GM10248 (cell line): ENCODE measurements at regions of chr1 and their contacts with region 1.

Region 1: DNA sequence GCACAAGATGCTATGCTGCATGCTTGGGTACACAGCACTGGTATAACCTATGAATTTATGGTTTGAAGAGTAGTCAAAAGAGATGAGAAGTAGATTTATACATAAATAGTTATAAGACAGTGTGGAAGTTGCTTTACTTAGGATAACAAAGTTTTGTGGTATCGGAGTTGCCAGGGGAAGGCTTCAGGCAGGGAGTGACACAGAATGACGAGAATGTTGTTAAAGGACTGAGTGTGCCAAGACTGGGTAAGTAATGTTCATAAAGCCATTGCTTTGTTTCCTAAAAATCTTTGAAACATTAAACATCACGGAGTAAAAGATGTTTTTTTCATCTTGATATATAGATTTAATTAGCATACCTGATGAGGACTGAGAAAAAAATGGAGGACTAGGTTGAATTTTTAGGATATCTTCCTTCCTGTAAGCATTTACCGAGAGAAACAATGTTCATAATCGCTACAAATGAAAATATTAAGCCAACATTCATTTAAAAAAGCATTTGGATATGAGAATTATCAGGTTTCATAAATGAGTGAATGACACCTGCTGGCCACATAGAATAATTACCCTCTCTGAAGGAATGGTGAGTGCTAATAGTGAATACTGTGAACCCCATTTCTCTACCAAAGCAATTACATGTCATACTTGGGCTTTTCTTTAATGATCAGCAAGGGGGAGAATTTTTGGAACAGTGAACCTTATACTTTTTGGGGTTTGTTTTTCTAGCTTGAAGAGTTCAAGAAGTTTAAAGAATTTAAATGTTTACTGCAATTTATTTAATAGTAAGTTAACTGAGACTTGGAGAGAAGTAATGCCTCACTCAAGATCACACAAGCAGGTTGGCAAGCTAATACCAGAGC is 28.4 kb downstream of the EXTL2 start:
- DNase-seq: peak; percentile 19
- CTCF ChIP-seq: peak; percentile 47

Region 2: DNA sequence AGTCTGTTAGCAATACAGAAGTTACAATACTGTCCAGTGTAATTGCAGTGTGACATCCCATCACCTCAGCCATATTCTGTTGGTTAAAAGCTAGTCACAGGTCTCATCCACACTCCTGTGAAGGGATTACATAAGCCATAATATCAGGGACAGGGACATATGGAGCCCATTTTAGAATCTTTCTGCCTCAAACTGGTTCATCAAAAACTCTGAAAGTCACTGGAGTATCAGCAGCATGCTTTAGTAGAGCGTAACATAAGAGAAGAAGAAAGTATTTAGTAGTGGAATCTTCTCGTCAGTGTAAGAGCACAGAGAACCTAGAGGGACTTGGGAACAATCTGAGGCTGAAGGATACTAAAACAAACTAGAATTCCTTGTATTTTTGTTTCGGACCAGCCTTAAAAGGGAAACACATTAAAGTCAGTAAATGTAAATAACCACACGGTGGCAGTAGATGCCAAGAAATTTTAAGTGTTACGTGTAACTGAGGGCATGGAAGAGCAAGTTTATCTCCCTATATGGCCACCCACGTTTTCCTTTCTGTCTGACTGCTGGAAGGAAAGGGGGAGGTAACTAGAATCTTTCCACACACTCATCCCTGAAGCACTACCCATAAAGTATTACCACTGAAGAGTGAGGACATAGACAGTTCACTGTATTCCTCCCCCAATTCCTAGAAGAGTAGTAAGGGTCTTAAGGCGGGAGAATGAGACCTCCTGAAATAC is 1057.7 kb before region 1 on chr1:
- CTCF ChIA-PET with region 1: interaction called, 31 read pairs
- POLR2A ChIA-PET with region 1: no interaction called
- DNase-seq: peak; percentile 66
- CTCF ChIP-seq: peak; percentile 43

Region 3: GRCh38 chr1:100799954-100800612 is 66.2 kb before region 1 on chr1:
- CTCF ChIA-PET with region 1: no interaction called
- POLR2A ChIA-PET with region 1: no interaction called
- DNase-seq: no peak
- CTCF ChIP-seq: no peak

Region 4: DNA sequence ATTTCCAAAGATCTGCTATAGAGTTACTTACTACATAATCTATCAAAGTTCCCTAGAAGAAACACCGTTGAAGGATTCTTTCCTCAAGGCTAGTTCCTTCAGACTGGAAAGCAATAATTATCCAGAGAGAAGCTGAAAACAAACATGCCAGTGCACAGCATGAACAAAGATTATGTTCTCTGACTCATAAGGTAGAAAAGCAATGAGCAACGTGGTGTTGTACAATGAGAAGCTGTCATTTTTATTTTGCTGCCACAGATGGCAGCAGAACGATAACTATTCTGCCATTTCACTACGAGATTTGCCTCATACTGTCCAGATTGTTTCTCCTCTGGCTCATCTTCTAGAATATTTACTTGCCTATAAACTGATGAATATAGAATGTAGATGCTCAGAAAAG is 17.7 kb after region 1 on chr1:
- CTCF ChIA-PET with region 1: interaction called, 48 read pairs
- POLR2A ChIA-PET with region 1: no interaction called
- DNase-seq: no peak
- CTCF ChIP-seq: no peak

Region 5: DNA sequence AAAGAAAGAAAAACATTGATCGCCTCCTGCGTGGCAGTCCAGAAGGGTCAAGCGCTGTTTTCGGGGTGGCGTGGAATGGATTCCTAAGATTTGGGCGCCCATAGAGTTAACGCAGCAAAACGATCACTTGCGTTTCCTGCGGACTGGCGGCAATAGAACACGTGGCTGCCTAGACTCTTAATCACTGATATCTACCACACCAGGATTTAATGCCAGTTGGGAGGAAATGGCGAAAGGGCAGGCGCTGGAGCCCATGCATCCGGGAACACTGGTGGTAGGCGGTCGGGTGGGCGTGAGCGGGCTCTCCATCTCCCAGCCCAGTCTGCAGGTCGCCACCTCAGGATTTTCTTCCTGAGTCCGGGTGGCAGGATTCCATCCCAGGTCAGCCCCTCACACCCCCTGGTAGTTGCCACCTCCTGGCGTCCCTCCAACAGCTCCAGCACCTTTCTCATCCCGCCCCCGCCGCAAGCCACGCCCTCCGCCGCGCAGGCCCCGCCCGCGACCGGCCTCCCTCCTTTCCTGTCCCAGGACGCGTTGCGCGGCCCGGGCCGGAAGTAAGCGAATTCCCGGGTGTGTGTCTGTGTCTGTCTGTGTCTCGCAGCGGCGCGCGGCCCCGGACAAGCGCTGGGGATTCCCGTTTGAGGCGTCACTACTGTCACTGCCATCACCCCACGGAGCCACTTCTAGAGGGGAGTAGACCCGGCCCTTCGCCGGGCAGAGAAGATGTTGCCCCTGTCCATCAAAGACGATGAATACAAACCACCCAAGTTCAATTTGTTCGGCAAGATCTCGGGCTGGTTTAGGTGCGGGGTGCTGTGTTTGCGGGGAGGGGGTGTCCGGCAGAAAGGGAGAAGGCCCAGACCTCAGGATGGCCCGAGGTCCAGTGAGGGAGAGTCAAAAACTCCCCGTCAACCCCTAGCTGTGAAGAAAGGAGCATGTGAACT is 29.5 kb after region 1 on chr1 and contains the start of gene SLC30A7:
- CTCF ChIA-PET with region 1: no interaction called
- POLR2A ChIA-PET with region 1: no interaction called
- DNase-seq: peak; percentile 89
- CTCF ChIP-seq: no peak